Activated T-helper 1 cell treated with anti-CD3 and anti-CD28 coated beads, Interleukin-12 subunit alpha, Interleukin-12 subunit beta, Interleukin-2, Interleukin-4 antibody, amounts not matched to agents 30 ng/mL and 10 ng/mL and 1 ng/mL, durations not matched to agents 14 hours and 24 hours and 36 hours (primary cell): ENCODE measurements at regions of chr4 and their contacts with region 1.

Region 1: DNA sequence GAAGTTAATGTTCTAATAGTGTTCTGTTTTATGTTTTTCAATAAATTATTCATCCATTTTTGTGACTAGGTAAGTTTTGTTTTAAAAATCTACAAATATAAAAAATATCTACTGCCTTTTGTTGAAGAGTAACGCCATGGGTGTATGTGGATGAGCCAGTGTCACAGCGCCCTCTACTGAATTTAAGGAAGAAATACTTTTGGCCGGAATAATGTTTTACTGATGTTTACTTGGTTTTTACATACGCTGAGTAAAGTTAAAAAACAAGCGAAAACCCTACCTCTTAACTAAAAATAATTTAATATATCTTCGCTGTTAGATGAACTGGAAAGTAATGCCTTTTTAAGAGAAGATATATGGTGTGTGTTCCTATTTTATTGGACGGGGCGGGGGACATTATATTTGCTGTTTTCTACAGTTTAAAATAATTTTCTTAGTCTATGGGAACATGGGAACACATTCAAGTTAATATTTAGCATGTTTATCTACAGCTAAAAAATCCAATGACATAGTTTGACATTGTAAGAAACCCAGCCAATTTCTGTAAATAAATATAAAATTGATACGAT is 86.1 kb downstream of the CPE start:
- DNase-seq: no peak
- H3K4me3 Mint-ChIP-seq: no peak overlapping the region
- H3K27ac Mint-ChIP-seq: no peak overlapping the region
- H3K4me1 Mint-ChIP-seq: no peaks in the 10 kb centered on the region
- H3K27me3 Mint-ChIP-seq: peaks cover 7% of the 10 kb centered on the region

Region 2: DNA sequence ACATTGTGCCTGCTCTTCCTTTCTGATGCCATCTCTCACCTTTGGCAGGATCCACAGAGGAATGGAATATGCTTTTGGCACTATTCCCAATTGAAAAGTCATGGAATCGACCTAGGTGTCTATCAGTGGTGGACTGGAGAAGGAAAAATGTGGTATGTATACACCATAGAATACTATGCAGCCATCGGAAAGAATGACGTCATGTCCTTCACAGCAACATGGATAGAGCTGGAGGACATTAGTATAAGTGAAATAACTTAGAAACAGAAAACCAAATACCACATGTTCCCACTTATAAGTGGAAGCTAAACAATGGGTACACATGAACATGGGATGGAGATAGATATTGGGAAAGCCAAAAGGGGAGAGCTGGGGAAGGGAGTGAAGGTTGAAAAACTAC is 769.2 kb before region 1 on chr4:
- intact Hi-C with region 1: no loop called
- DNase-seq: no peak
- H3K4me3 Mint-ChIP-seq: no peak overlapping the region
- H3K27ac Mint-ChIP-seq: no peak overlapping the region
- H3K4me1 Mint-ChIP-seq: no peaks in the 10 kb centered on the region
- H3K27me3 Mint-ChIP-seq: peaks cover 2% of the 10 kb centered on the region

Region 3: DNA sequence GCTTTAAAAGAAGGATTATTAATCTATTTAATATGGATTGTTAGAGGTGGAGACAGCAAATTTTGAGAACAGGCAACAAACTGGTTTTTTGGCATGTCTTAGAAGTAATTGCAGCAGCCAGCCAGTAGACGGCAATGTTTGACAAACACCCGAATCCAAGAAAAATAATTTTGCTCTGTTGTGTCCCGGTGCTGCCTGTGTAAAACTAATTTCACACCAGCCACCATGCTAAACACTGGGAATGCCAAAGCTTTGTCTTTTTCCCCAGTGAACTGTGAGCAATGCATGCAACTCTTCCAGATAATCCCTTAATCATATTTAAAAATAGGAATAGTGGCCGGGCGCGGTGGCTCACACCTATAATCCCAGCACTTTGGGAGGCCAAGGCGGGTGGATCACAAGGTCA is 685.1 kb before region 1 on chr4:
- intact Hi-C with region 1: loop called (anchors 1 kb)
- DNase-seq: no peak
- H3K4me3 Mint-ChIP-seq: no peak overlapping the region
- H3K27ac Mint-ChIP-seq: no peak overlapping the region
- H3K4me1 Mint-ChIP-seq: no peaks in the 10 kb centered on the region
- H3K27me3 Mint-ChIP-seq: peaks cover 3% of the 10 kb centered on the region

Region 4: GRCh38 chr4:165085946-165086345 is 379.0 kb before region 1 on chr4:
- intact Hi-C with region 1: no loop called
- DNase-seq: no peak
- H3K4me3 Mint-ChIP-seq: no peak overlapping the region
- H3K27ac Mint-ChIP-seq: no peak overlapping the region
- H3K4me1 Mint-ChIP-seq: no peaks in the 10 kb centered on the region
- H3K27me3 Mint-ChIP-seq: no peaks in the 10 kb centered on the region

Region 5: DNA sequence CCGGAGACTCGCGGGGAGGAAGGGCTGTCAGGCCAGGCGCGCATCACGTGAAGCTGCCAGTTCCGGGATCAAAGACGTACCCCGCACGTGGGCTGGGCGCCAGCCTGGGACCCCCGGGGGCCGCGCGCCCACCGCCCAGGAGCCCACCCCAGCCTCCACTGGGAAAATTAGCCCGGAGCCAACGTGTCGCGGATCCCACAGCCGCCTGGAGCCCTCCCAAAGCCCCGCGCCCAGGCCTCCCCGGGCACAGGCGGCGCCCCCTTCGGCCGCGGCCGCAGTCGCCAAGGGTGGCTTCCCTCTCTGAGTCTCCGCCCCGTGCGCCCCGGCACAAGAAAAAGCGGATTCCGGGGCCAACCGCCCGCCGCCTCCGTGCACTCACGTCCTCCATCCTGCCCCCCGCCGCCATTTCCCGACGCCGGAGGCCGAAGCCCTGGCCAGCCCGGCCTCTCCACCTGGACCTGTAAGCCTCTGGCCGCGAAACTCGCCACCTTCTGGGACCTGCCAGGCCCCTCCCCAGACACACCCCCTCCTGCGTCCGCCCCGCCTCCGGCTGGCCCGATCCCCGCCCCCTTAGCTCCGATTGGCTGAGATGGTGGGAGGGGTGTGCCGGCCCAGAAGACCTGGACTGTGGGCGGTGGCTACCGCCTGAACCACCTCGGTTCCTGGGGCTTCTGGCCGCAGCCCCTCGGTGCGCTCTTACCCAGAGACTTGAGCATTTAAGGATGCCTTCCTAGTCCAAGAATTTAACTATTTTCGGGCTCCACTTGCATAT is 352.3 kb before region 1 on chr4 and contains the start of gene TMEM192:
- intact Hi-C with region 1: loop called (anchors 1 kb)
- DNase-seq: peak; percentile 87
- H3K4me3 Mint-ChIP-seq: peak within 1 kb of the TSS; percentile 91
- H3K27ac Mint-ChIP-seq: peak within 1 kb of the TSS; percentile 86
- H3K4me1 Mint-ChIP-seq: peaks cover 12% of the 10 kb centered on the region
- H3K27me3 Mint-ChIP-seq: peaks cover 7% of the 10 kb centered on the region
- total RNA-seq, gene TMEM192: 8.1 and 10.5 TPM in 2 replicates

Region 6: DNA sequence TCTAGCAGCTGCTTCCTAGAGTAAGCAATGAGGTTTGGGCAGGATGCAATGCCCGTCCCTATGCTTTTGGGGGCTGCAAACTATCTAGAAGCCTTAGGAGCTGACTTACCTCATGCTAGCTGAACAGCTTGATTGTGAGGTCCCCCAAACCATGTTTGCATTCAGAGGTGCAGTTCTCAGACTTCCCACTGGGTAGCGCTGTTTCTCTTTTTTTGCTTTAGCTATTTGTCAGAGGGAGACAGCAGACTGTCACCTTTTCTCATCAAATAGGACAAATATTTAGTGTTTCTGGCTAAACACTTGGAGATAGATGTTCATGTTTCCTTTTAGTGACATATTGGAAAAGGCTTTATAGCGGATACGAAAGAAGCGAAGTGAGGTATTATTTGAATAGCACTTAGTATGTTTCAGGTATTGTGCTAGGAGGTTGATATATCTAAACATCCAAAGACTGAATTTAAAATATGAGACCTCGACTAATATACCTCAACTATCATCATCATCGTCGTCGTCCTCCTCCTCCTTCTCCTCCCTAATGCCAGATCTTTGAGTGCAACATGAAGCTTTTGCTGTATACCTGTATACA is 333.6 kb before region 1 on chr4:
- intact Hi-C with region 1: loop called (anchors 1 kb)
- DNase-seq: peak; percentile 65
- H3K4me3 Mint-ChIP-seq: no peak overlapping the region
- H3K27ac Mint-ChIP-seq: no peak overlapping the region
- H3K4me1 Mint-ChIP-seq: peaks cover 18% of the 10 kb centered on the region
- H3K27me3 Mint-ChIP-seq: peaks cover 5% of the 10 kb centered on the region

Region 7: DNA sequence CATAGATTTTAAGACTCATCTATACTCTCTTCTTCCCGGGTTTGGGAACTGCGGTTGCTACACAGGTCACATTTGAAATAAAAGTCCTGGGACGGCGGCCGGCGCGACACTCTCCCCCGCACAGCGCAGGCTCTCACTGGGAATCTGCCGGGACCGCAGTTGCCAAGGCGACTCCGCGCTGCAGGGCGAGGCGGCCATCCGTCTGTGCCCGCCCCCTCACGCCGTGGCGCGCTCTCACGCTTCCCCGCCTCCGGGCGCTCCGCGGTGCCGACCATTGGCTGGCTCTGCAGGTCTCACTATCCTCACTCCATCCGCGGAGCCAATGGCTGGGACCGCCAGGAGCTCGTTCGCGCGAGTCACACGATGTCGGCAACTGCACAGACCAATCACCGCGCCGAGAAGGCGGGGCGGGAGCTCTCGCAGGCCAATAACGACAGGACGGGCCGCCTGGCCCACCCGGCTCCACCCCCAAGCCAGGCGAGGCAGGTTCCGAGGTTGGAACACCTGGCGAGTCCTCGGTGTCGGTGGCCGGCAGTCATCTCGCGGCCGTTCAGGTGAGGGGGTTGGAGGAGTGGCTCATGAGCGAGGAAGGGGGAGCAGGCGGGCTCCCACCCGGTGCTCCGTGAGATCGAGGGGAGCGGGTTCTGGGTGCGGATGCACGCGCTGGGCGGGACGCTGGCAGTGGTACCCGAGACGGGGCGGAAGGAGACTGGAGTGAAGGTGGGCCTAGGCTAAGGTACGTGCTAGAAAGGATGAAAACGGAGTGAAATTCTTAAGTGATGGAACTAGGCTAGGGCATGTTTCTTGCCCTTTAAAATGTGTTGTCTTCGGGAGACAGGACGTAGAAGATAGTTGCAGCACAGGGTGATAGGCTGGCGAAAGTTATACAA is 137.4 kb before region 1 on chr4 and contains the start of gene MSMO1:
- intact Hi-C with region 1: loop called (anchors 5 kb)
- DNase-seq: peak; percentile 99
- H3K4me3 Mint-ChIP-seq: no peak within 1 kb of the TSS
- H3K27ac Mint-ChIP-seq: no peak within 1 kb of the TSS
- H3K4me1 Mint-ChIP-seq: peaks cover 40% of the 10 kb centered on the region
- H3K27me3 Mint-ChIP-seq: no peaks in the 10 kb centered on the region
- total RNA-seq, gene MSMO1: 74.1 and 93.1 TPM in 2 replicates

Region 8: GRCh38 chr4:165364452-165365080 is 100.3 kb before region 1 on chr4:
- intact Hi-C with region 1: loop called (anchors 5 kb)
- DNase-seq: no peak
- H3K4me3 Mint-ChIP-seq: no peak overlapping the region
- H3K27ac Mint-ChIP-seq: no peak overlapping the region
- H3K4me1 Mint-ChIP-seq: no peaks in the 10 kb centered on the region
- H3K27me3 Mint-ChIP-seq: peaks cover 24% of the 10 kb centered on the region

Region 9: DNA sequence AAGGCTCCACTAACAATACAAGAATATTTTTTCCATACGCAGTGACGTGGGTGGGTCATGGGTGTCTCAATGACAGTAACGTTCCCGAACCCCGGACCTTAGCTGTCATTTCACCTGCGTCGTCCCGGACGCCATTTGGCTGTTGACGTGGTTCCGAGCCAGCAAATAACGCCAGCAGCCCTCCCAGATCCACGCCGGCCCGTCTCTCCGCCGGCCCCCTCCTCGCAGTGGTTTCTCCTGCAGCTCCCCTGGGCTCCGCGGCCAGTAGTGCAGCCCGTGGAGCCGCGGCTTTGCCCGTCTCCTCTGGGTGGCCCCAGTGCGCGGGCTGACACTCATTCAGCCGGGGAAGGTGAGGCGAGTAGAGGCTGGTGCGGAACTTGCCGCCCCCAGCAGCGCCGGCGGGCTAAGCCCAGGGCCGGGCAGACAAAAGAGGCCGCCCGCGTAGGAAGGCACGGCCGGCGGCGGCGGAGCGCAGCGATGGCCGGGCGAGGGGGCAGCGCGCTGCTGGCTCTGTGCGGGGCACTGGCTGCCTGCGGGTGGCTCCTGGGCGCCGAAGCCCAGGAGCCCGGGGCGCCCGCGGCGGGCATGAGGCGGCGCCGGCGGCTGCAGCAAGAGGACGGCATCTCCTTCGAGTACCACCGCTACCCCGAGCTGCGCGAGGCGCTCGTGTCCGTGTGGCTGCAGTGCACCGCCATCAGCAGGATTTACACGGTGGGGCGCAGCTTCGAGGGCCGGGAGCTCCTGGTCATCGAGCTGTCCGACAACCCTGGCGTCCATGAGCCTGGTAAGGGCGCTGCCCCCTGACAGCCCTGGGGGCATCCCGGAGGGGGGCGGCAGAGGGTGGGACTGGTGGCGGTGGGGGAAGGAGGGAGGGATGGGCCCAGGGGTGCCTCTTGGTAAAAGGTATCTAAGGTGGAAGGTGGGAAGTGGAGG is 85.9 kb before region 1 on chr4 and contains the start of gene CPE:
- intact Hi-C with region 1: loop called (anchors 5 kb)
- DNase-seq: peak; percentile 31
- H3K4me3 Mint-ChIP-seq: peak within 1 kb of the TSS; percentile 72
- H3K27ac Mint-ChIP-seq: no peak within 1 kb of the TSS
- H3K4me1 Mint-ChIP-seq: peaks cover 5% of the 10 kb centered on the region
- H3K27me3 Mint-ChIP-seq: peaks cover 72% of the 10 kb centered on the region
- total RNA-seq, gene CPE: 0.07 TPM in 1 of 2 replicates, not detected in the other